GM23248 (cell line): ENCODE measurements at regions of chr6 and their contacts with region 1.

Region 1: GRCh38 chr6:82178077-82178758 is 69.3 kb downstream of the IBTK start:
- DNase-seq: peak; percentile 72
- H3K4me3 ChIP-seq: no peak overlapping the region
- H3K27ac ChIP-seq: peak overlapping the region; percentile 55
- H3K4me1 ChIP-seq: peaks cover 57% of the 10 kb centered on the region
- H3K27me3 ChIP-seq: no peaks in the 10 kb centered on the region

Region 2: DNA sequence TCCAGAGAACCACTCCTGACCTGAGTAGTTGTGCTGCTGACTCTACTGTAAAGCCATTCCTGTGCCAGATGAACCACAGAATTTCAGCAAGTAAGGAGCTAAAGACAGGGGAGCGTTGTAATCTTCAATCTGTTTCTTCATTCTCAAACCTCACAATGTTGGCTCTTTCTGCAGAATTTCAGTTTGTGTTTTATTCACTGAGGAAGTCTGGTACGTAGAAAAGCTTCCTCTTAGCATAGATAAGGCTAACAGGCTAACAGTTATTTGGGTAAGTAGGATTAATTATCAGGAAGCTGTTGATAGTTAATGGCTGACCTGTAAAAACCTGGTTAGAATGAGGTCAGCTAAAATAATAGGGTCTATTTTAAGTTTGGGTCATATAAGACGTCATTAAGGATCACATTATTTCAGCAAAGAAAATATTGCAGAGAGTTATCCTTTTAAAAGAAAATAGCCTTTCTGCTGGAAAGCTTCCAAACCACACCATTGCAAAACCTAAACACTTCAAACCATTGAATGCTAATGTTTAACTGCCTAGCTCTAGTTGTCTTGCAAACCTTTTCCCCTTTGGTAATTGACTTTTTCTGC is 411.6 kb before region 1 on chr6:
- in situ Hi-C with region 1: loop called (anchors 10 kb)
- DNase-seq: peak; percentile 79
- H3K4me3 ChIP-seq: peak overlapping the region; percentile 42
- H3K27ac ChIP-seq: peak overlapping the region; percentile 81
- H3K4me1 ChIP-seq: peaks cover 58% of the 10 kb centered on the region
- H3K27me3 ChIP-seq: no peaks in the 10 kb centered on the region

Region 3: DNA sequence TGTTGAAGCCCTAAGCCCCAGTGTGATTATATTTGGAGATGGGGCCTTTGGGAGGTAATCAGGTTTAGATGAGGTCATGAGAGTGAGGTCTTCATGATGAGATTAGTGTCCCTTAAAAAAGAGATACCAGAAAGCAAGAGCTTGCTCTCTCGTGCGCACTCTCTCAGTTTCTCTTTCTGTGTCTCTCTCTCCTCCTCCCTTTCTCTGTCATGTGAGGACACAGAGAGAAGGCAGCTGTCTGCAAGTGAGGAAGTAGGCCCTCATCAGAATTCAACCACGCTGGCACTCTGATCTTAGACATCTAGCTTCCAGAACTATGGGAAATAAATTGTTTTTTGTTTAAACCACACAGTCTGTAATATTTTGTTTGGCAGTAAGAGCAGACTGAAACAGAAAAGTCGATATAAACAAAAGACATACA is 111.2 kb before region 1 on chr6:
- in situ Hi-C with region 1: no loop called
- DNase-seq: peak; percentile 7
- H3K4me3 ChIP-seq: no peak overlapping the region
- H3K27ac ChIP-seq: no peak overlapping the region
- H3K4me1 ChIP-seq: peaks cover 7% of the 10 kb centered on the region
- H3K27me3 ChIP-seq: no peaks in the 10 kb centered on the region

Region 4: DNA sequence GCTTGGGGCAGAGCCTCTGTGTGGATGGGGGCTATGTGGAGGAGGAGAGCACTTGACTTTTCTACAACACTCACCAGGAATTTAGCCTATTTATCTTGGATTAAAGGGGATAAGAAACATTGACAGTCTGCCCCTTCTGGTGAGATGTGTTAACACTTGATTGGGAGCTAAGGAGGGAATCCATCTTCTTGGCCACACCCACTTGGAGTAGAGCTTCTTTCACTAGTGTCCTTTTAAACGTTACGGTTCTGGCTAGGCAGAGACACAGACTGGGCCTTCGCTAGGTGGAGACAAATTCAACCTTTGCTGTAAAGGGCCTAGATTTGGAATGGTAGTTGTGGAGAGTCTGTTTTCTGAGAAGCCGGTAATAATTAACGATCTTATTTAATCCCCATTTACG is 169.9 kb after region 1 on chr6:
- in situ Hi-C with region 1: no loop called
- DNase-seq: no peak
- H3K4me3 ChIP-seq: no peak overlapping the region
- H3K27ac ChIP-seq: no peak overlapping the region
- H3K4me1 ChIP-seq: no peaks in the 10 kb centered on the region
- H3K27me3 ChIP-seq: no peaks in the 10 kb centered on the region

Region 5: DNA sequence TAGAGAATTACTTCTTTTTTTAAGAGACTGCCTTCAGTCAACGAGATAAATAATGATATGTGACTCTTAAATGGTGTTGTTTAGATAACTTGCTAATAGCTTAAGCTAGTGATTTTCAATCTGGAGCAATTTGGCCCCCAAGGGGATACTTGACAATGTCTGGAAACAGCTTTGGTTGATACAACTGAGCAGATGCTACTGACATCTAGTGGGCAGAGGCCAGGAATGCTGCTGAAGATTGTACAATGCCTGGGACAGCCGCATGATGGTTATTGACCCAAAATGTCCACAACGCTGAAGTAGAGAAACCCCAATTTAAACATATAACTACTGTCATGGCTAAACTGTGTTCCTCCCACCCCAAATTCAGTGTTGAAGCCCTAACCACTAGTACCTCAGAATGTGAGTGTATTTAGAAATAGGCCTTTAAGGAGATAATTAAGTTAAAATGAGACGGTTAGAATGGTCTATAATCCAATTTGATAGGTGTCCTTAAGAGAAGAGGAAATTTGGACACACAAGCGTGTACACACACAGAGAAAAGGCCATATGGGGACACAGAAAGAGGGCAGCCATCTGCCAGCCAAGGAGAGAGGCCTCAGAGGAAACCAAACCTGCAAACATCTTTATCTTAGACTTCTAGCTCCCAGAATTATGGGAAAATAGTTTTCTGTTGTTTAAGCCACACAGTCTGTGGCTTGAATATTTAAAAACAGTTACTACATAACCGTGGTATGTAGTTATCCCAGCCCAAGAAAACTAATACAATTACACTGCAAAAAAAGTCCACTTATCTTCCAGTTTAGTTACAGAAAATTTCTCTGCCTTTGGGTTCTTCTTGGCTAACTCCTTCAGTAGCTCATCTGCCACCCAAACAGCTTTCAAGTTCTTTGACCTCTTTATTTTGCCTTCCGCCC is 1037.2 kb after region 1 on chr6:
- in situ Hi-C with region 1: no loop called
- DNase-seq: peak; percentile 86
- H3K4me3 ChIP-seq: no peak overlapping the region
- H3K27ac ChIP-seq: peak overlapping the region; percentile 45
- H3K4me1 ChIP-seq: peaks cover 10% of the 10 kb centered on the region
- H3K27me3 ChIP-seq: no peaks in the 10 kb centered on the region